HCT116 (cell line): ENCODE measurements at regions of chr7 and their contacts with region 1.

Region 1: GRCh38 chr7:121303422-121304101 is 25.2 kb upstream of the WNT16 start:
- DNase-seq: no peak
- ATAC-seq: no peak
- H3K4me3 ChIP-seq: no peak overlapping the region
- H3K27ac ChIP-seq: peak overlapping the region; percentile 96
- H3K4me1 ChIP-seq: peaks cover 61 to 90% of the 10 kb centered on the region in 2 experiments
- H3K27me3 ChIP-seq: no peaks in the 10 kb centered on the region
- CTCF ChIP-seq: peak; percentile 23 to 51 (median 32); a peak in 5 of 6 replicates
- POLR2A ChIP-seq: no peak
- RAD21 ChIP-seq: peak; percentile 59

Region 2: DNA sequence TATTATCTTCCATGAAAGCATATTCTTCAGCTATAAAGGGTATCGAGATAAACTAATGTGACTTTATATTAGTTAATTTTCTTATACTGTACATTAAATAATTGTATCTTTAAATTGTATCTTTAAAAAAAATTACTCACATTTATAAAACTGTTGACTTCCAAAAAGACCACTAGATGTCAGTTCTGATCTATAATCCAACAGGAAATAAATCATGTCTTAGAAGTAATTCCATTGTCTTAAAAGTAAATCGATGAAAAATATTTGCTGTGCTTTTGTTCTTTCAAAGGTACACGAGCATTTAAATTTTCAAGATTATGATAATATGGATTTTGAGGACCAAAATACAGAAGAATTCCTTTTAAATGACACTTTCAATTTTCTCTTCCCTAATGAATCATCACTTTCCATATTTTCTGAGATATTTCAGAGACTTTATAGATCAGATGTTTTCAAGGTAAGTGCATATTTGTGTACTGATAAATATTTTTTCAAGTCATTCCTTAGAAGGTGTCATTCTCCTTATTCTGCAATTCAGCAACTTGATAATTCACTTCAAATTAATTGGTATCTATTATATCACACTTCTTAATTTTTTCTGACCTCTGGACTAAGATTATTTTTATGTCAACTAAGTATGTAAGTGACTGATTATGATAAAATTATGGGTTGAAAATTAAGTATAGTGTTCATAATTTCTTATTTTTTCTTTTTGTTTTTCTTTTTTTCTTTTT is 176.6 kb before region 1 on chr7:
- CTCF ChIA-PET with region 1: interaction called, 4 read pairs
- POLR2A ChIA-PET with region 1: no interaction called
- RAD21 ChIA-PET with region 1: no interaction called
- intact Hi-C with region 1: loop called (anchors 1 kb)
- DNase-seq: peak; percentile 51
- ATAC-seq: no peak
- H3K4me3 ChIP-seq: no peak overlapping the region
- H3K27ac ChIP-seq: no peak overlapping the region; the same call in 1 of the 2 replicates
- H3K4me1 ChIP-seq: peaks cover 4 to 28% of the 10 kb centered on the region in 2 experiments; a peak in 3 of 4 replicates
- H3K27me3 ChIP-seq: no peaks in the 10 kb centered on the region
- CTCF ChIP-seq: peak; percentile 16 to 88 (median 47); a peak in 5 of 6 replicates
- POLR2A ChIP-seq: no peak
- RAD21 ChIP-seq: peak; percentile 88

Region 3: GRCh38 chr7:121219026-121219425 is 84.5 kb before region 1 on chr7:
- CTCF ChIA-PET with region 1: no interaction called
- POLR2A ChIA-PET with region 1: no interaction called
- RAD21 ChIA-PET with region 1: no interaction called
- intact Hi-C with region 1: no loop called
- DNase-seq: no peak
- ATAC-seq: no peak
- H3K4me3 ChIP-seq: no peak overlapping the region
- H3K27ac ChIP-seq: no peak overlapping the region
- H3K4me1 ChIP-seq: no peaks in the 10 kb centered on the region
- H3K27me3 ChIP-seq: no peaks in the 10 kb centered on the region
- CTCF ChIP-seq: no peak
- POLR2A ChIP-seq: no peak
- RAD21 ChIP-seq: no peak

Region 4: DNA sequence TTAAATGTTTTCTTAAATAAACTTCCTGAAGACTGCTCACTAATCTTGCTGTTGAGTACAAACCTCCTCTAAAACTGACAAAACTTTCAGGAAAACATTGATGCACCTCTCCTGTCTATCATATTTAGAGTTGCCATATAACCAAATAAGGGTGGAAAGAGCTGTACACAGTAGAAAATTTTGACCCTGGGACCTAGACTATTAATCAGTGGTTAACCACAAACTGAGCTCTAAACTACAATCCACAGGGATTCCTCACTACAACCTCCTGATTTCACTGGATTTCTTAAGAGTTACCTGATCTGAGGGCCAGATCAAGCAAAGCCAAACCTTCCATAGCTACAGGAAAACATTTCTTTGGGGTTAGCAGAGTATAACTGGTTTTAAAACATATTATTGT is 14.7 kb before region 1 on chr7:
- CTCF ChIA-PET with region 1: no interaction called
- POLR2A ChIA-PET with region 1: no interaction called
- RAD21 ChIA-PET with region 1: no interaction called
- intact Hi-C with region 1: no loop called
- DNase-seq: peak; percentile 79
- ATAC-seq: peak; percentile 86
- H3K4me3 ChIP-seq: no peak overlapping the region
- H3K27ac ChIP-seq: peak overlapping the region; percentile 9; the same call in 1 of the 2 replicates
- H3K4me1 ChIP-seq: peaks cover 10 to 28% of the 10 kb centered on the region in 2 experiments; a peak in 3 of 4 replicates
- H3K27me3 ChIP-seq: no peaks in the 10 kb centered on the region
- CTCF ChIP-seq: no peak
- POLR2A ChIP-seq: no peak
- RAD21 ChIP-seq: no peak

Region 5: DNA sequence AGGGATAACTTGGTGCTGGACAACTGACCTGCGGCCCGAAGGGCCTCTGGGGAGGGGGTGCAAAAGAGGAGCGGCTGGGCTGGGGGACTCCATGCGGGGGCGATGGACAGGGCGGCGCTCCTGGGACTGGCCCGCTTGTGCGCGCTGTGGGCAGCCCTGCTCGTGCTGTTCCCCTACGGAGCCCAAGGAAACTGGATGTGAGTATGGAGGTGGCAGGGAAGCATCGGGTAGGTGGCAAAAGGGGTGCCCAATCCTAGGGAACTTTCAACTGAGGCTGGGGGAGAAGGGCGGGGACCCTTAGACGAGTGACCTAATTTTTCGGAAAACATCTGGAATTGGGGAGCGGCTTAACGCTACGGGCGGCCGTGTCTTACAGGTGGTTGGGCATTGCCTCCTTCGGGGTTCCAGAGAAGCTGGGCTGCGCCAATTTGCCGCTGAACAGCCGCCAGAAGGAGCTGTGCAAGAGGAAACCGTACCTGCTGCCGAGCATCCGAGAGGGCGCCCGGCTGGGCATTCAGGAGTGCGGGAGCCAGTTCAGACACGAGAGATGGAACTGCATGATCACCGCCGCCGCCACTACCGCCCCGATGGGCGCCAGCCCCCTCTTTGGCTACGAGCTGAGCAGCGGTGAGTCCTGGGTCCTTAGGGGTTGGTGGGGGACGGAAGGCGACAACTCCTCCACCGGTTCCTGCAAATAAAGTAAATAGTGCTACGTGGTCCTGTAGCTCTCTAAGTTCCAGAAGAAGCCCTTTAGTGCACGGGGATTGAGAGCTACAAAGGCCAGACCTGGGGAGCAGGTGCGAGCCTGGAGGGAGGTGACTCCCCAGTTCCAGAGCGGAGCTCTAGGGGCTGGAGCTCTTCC is 25.9 kb after region 1 on chr7:
- CTCF ChIA-PET with region 1: no interaction called
- POLR2A ChIA-PET with region 1: no interaction called
- RAD21 ChIA-PET with region 1: no interaction called
- intact Hi-C with region 1: loop called (anchors 2 kb)
- DNase-seq: no peak
- ATAC-seq: peak; percentile 56
- H3K4me3 ChIP-seq: peak overlapping the region; percentile 55 to 88
- H3K27ac ChIP-seq: peak overlapping the region; percentile 92
- H3K4me1 ChIP-seq: peaks cover 35 to 68% of the 10 kb centered on the region in 2 experiments; a peak in 3 of 4 replicates
- H3K27me3 ChIP-seq: no peaks in the 10 kb centered on the region
- CTCF ChIP-seq: 0 out of 6 replicates have a peak, but pooled peaks of 1 of the 3 experiments have one; percentile 19
- POLR2A ChIP-seq: peak; percentile 8
- RAD21 ChIP-seq: peak; percentile 25; the same call in 1 of the 2 replicates

Region 6: DNA sequence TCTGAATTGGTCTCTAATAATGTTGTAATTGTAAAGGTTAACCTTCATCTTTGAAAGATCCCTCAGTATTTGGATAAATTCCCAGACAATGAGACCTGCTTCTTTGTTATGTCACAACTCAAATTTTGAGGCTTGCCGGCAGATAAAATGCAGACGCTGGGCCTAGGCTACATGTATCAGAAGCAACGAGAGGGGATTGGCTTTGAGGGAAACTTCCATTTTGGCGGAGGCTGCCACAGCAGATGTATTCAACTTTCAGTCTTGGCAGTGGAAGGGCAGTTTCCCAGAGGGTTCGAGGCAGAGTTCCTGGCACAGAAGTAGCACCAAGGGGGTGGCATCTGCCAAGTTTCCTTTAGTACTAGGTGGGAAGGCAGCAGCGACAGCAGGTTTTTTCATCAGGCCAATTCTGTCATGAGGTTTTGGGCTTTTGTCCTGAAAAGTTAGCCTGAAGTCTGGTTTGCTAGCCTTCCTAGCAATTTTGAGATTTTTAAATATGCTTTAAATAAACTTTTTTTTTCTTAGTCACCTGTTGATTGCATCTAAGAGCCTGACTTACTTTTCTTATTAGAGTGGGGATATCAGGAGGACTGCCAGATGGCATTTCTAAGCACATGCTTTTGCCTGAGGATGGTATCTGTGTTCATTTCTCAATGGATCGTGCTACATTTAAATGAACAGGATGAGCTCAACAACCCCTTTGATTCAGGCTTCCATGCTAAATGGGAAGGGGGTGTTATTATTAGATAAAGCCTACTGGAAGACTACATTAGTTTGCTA is 182.1 kb after region 1 on chr7:
- CTCF ChIA-PET with region 1: no interaction called
- POLR2A ChIA-PET with region 1: no interaction called
- RAD21 ChIA-PET with region 1: no interaction called
- intact Hi-C with region 1: no loop called
- DNase-seq: no peak
- ATAC-seq: no peak
- H3K4me3 ChIP-seq: no peak overlapping the region
- H3K27ac ChIP-seq: no peak overlapping the region
- H3K4me1 ChIP-seq: peaks cover 0 to 6% of the 10 kb centered on the region in 2 experiments; a peak in 1 of 4 replicates
- H3K27me3 ChIP-seq: no peaks in the 10 kb centered on the region
- CTCF ChIP-seq: no peak
- POLR2A ChIP-seq: no peak
- RAD21 ChIP-seq: no peak